Colonic mucosa (tissue), 4 donors: ENCODE measurements at regions of chr6 and their contacts with region 1.

Region 1: DNA sequence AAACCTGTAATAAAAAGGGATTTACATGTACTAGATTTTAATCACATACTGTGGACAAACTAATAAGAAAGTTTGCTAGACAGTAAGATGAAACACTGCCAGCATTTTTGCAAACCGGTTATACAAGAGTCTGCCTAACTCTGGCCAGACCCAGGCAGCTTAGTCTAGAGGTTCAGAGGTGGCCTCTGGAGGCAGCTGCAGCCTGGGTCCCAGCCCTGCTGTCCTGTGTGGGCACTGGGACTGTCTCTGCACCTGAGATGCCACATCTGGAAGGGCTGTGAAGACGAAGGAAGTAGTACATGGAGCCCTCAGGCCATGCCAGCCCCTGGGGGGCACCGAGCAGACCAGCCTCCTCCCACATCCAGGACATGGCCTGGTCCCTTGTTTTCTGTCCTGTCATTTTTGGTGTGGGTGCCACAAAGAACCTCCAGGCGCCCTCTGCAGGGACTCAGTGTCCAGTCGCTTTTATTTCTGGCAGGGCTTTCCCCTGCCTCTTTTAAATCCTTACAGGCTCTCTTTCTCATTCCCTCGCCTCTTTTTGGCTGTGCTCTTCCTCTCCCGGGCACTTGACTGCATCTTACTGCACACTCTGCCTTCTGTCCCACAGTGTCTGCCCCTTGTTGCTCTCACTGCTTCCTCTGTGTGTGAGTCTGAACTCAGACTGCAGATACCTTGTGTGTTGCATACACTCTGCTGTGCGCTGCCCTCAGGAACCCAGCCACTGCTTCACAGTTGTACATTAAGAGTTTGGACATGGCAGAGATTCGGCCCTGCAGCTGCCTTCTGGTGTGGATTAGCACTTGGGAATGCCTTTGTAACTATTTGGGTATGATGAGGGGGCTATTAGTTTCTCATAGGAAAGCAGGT is 216.7 kb downstream of the ZDHHC14 start:
- DNase-seq: peak; percentile 58
- H3K4me3 ChIP-seq: no peak overlapping the region
- H3K27ac ChIP-seq: peak overlapping the region; percentile 52
- H3K4me1 ChIP-seq: no peaks in the 10 kb centered on the region
- H3K27me3 ChIP-seq: no peaks in the 10 kb centered on the region
- CTCF ChIP-seq: peak; percentile 51

Region 2: GRCh38 chr6:157323255-157323965 is 274.3 kb before region 1 on chr6 and contains the start of gene TMEM242:
- intact Hi-C with region 1: loop called (anchors 5 kb)
- DNase-seq: peak; percentile 94
- H3K4me3 ChIP-seq: peak within 1 kb of the TSS; percentile 72
- H3K27ac ChIP-seq: peak within 1 kb of the TSS; percentile 86
- H3K4me1 ChIP-seq: peaks cover 8% of the 10 kb centered on the region
- H3K27me3 ChIP-seq: no peaks in the 10 kb centered on the region
- CTCF ChIP-seq: no peak
- total RNA-seq, gene TMEM242: 10.8 to 11.9 TPM

Region 3: DNA sequence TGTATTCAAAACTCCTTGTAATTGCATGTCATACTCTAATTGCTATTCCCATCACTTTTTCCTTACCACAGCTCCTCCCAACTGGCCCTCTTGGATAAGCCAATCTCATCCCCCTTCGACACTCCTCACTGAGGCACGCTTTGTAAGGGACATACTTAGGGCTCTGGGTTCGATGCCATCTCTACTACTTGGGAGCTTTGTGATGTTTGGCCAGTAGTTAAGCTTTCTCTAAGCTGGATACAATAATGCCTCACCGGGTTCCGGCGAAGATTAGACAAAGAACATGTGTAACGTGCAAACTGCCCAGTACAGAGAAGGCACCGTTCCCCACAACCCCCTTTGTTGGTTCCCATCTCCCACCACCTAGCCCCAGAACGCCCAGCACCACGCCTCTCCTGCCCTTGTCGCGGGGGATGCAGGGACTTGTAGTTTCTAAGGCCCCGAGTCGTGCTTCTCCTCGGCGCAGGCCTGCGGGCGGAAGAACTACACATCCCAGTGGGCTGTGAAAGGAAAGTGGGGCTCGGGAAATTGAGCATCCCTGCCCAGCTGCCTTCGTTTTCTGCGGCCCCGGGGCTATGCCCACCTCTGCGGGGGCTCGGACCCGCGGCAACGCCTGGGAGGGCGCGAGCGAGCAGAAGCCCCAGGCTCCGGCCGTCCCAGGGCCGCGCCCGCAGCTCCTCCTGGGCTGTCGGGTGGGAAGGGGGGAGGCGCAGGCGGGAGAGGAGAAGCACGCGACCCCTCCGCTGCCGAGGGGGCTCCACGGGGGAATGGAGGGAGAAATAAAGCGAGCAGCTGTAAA is 217.8 kb before region 1 on chr6:
- intact Hi-C with region 1: loop called (anchors 5 kb)
- DNase-seq: peak; percentile 95
- H3K4me3 ChIP-seq: peak overlapping the region; percentile 99
- H3K27ac ChIP-seq: peak overlapping the region; percentile 99
- H3K4me1 ChIP-seq: no peaks in the 10 kb centered on the region
- H3K27me3 ChIP-seq: no peaks in the 10 kb centered on the region
- CTCF ChIP-seq: no peak

Region 4: GRCh38 chr6:157405986-157406385 is 191.7 kb before region 1 on chr6:
- intact Hi-C with region 1: no loop called
- DNase-seq: no peak
- H3K4me3 ChIP-seq: no peak overlapping the region
- H3K27ac ChIP-seq: no peak overlapping the region
- H3K4me1 ChIP-seq: no peaks in the 10 kb centered on the region
- H3K27me3 ChIP-seq: no peaks in the 10 kb centered on the region
- CTCF ChIP-seq: no peak